Posterior vena cava (tissue), 2 donors: ENCODE measurements at regions of chr13 and their contacts with region 1.

Region 1: DNA sequence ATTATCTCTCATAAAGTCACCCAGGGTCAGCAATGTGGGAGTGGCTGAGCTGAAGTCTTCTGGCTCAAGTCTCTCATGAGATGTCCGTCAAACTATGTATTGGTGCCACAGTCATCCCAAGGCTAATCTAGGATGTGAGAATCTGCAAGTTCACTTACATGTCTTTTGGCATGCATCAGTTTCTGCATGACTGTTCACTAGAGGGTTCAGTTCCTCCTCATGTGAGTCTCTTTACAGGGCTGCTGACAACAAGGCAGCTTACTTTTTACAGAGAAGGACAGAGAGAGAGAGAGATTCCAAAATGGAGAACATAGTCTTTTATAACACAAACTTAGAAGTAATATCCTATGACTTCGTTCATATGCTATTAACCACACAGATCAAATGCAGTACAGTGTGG is 328.8 kb upstream of the SLITRK1 start:
- DNase-seq: no peak

Region 2: DNA sequence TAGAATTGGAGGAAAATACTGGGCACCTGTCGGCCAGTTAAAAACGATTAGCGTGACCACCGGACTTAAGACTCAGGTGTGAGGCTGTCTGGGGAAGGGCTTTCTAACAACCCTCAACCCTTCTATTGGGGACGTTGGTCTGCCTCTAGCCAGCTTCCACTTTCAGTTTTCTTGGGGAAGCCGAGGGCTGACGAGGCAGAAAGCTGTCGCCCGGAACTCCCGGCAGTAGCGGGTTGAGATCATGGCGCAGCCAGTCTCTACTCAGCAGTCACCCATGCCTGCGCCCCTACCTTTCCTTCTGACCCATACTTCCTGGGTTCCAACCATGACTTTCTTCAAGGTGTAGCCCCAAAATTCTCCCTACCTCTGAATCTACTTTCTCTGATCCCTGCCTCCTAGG is 1752.9 kb before region 1 on chr13:
- intact Hi-C with region 1: loop called in 1 of 2 experiments (anchors 5 kb)
- DNase-seq: no peak

Region 3: DNA sequence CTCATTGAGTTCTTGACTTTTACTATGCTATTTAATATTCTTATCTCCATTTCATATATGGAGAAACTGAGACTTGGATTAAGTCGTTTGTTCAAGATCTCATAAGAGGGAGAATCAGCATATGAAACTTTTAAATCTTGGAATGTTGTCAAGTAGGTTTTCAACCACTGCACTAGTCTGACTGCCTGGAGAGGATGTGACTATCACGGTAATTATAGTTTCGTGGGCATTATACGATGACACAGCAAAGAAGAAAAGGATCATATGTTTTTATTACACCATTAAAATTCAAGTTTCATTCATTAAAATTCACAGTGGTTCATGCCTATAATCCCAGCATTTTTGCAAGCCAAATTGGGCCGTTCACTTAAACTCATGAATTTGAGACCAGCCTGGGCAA is 884.0 kb before region 1 on chr13:
- intact Hi-C with region 1: no loop called
- DNase-seq: no peak

Region 4: GRCh38 chr13:84096216-84096615 is 114.8 kb before region 1 on chr13:
- intact Hi-C with region 1: no loop called
- DNase-seq: no peak